Activated CD4-positive, alpha-beta memory T cell treated with anti-CD3 and anti-CD28 coated beads, Interleukin-2, amount 10 ng/mL, durations not matched to agents 7 days and 5 days (primary cell): ENCODE measurements at regions of chr6 and their contacts with region 1.

Region 1: GRCh38 chr6:144095331-144096002 is at the start of gene SF3B5:
- DNase-seq: peak; percentile 99
- H3K4me3 Mint-ChIP-seq: peak within 1 kb of the TSS; percentile 88
- H3K27ac Mint-ChIP-seq: peak within 1 kb of the TSS; percentile 94
- H3K4me1 Mint-ChIP-seq: peaks cover 24% of the 10 kb centered on the region
- H3K27me3 Mint-ChIP-seq: no peaks in the 10 kb centered on the region
- total RNA-seq, gene SF3B5: 128 to 130 TPM

Region 2: DNA sequence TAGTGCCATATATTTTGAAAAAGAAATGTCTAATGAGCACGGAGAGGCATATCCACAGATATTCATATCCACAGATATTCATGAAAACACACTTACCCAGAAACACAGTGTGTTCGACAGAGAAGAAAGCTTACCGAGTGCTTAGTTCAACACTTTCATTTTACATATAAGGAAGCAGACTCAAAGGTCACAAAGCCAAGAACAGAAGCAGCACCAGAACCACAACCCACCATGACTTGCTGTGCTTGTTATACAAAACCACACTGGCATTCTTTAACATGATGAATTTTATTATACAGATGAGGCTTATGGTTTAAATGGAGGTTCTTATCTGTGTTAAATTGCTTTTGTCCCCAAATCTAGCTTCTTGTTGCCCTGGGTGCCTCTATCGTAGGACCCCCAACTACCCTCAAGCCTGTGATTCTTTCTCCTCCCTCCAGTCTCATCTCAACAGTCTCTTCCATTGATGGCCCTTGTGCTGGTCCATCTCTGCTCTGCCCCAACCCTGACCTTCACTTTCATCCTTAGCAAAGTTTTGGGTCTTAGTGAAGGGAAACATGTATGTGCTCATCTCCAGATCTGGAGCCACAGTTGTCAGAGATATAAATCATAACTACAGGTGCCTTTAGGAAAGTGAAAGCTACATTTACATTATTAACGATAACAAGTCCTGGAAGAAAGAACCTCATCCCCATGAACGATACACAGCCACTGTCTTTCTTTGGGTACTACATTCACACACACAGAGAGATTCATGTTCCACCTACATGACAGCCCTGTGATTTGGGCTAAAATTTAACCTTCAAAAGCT is 40.1 kb before region 1 on chr6:
- CTCF ChIA-PET with region 1: interaction called, 6 read pairs
- POLR2A ChIA-PET with region 1: interaction called, 18 read pairs
- DNase-seq: peak; percentile 64
- H3K4me3 Mint-ChIP-seq: peak overlapping the region; percentile 69
- H3K27ac Mint-ChIP-seq: peak overlapping the region; percentile 82
- H3K4me1 Mint-ChIP-seq: peaks cover 32% of the 10 kb centered on the region
- H3K27me3 Mint-ChIP-seq: no peaks in the 10 kb centered on the region

Region 3: DNA sequence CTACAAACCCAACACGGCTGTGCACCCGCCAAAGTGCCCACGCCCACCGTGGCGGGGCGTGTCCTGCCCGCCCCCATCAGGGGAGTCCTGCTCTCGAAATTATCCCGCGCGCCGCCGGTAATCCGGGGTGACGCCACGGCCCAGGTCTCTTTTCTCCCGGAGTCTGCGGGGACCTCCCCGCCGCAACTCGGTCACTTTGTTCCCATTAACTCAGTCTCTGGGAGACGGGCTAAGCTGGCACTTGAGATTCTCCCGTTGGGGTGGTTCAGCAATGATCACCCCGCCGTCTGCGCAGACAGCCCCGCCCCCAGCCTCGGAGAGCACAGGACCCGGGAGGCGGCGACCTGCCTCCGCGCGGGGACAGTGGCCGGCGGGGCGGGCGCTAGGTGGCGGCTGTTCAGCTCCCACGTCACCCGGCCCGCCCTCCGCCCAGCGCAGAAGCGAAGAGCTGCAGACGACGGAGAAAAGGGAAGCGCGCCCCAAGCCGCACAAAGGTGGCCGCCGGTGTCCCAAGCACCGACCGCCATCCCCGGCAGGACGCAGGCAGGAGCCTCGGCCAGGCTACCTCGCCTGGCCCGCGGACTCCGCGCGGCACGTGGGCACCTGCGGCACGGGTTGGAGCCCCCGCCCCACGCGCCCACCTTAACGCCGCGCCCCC is 31.6 kb before region 1 on chr6:
- CTCF ChIA-PET with region 1: interaction called, 13 read pairs
- POLR2A ChIA-PET with region 1: interaction called, 73 read pairs
- DNase-seq: peak; percentile 93
- H3K4me3 Mint-ChIP-seq: peak overlapping the region; percentile 79
- H3K27ac Mint-ChIP-seq: peak overlapping the region; percentile 58
- H3K4me1 Mint-ChIP-seq: peaks cover 46% of the 10 kb centered on the region
- H3K27me3 Mint-ChIP-seq: peaks cover 13% of the 10 kb centered on the region